ENCODE measurements at regions of chr1 and their contacts with region 1.

Region 1: GRCh38 chr1:17653728-17654351 is 101.3 kb upstream of the ACTL8 start:
- DNase-seq: no peak
- ATAC-seq: peak; percentile 15 to 57 (median 38)
- H3K4me3 ChIP-seq: no peak overlapping the region
- H3K27ac ChIP-seq: peak overlapping the region in 5 of 12 donors; percentile 2 to 47 (median 13)
- H3K4me1 ChIP-seq: peaks cover 0 to 16% (median 8%) of the 10 kb centered on the region in 12 donors
- H3K27me3 ChIP-seq: no peaks in the 10 kb centered on the region
- CTCF ChIP-seq: peak; percentile 40 to 74 (median 59)
- POLR2A ChIP-seq: no peak

Region 2: GRCh38 chr1:18100491-18101063 is 446.7 kb after region 1 on chr1:
- intact Hi-C with region 1: loop called in 1 of 10 experiments (anchors 10 kb)
- DNase-seq: peak in 4 of 5 donors; percentile 26 to 57 (median 40)
- ATAC-seq: peak; percentile 34 to 62 (median 52)
- H3K4me3 ChIP-seq: no peak overlapping the region
- H3K27ac ChIP-seq: no peak overlapping the region
- H3K4me1 ChIP-seq: no peaks in the 10 kb centered on the region
- H3K27me3 ChIP-seq: peaks cover 0 to 46% (median 12%) of the 10 kb centered on the region in 9 donors
- CTCF ChIP-seq: peak; percentile 58 to 78 (median 70)
- POLR2A ChIP-seq: no peak

Region 3: GRCh38 chr1:18581420-18581880 is 927.6 kb after region 1 on chr1:
- intact Hi-C with region 1: loop called in 1 of 10 experiments (anchors 10 kb)
- DNase-seq: peak in 1 of 5 donors; percentile 35
- ATAC-seq: peak in 3 of 4 donors; percentile 29 to 41 (median 29)
- H3K4me3 ChIP-seq: no peak overlapping the region
- H3K27ac ChIP-seq: no peak overlapping the region
- H3K4me1 ChIP-seq: peaks cover 0 to 17% (median 0%) of the 10 kb centered on the region in 12 donors
- H3K27me3 ChIP-seq: peaks cover 0 to 29% (median 0%) of the 10 kb centered on the region in 9 donors
- CTCF ChIP-seq: peak; percentile 47 to 77 (median 64)
- POLR2A ChIP-seq: no peak